Common myeloid progenitor, CD34-positive (primary cell): ENCODE measurements at regions of chr2 and their contacts with region 1.

Region 1: DNA sequence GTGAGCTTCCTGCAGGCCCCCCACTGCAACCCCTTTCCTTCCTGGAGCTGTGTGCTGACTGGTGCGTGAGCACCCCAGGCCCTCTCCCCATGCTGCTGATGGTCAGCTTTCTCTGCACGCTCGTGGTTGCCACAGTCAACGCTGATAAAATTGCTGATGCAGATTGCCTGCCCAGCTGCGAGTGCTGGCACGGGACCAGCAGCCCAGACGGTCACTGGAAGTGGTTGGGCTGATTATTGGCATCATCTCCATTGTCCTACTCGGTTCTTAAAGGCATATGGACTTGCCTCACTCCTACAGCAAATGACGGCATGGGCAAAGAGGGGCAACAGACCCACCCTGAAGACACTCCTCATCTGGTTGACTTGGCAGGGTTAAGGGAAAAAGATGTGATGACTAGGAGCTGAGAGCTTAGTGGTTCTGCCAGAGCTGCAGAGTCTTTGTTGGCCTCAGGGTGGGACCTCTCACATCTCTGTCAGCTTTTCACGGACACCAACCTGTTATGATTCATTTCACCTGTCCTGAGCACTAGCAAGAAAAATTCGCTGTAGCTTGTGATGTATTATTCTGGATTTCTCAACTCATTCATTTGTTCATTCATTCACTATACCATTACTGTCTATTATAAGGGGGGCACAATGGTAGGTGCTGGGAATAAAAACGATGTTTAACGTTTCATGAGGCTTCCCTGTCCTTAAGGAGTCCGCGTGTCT is 38.4 kb downstream of the PAX8 start:
- DNase-seq: peak in 2 of 3 donors; percentile 51 to 59
- H3K4me3 ChIP-seq: peak overlapping the region in 3 of 7 experiments; percentile 12 to 31 (median 25)
- H3K27ac ChIP-seq: no peak overlapping the region
- H3K4me1 ChIP-seq: peaks cover 4 to 47% (median 22%) of the 10 kb centered on the region in 4 experiments
- H3K27me3 ChIP-seq: no peaks in the 10 kb centered on the region

Region 2: GRCh38 chr2:113225263-113226259 is 14.7 kb before region 1 on chr2:
- CTCF ChIA-PET with region 1: interaction called, 13 read pairs
- POLR2A ChIA-PET with region 1: no interaction called
- DNase-seq: peak in 2 of 3 donors; percentile 57 to 63
- H3K4me3 ChIP-seq: no peak overlapping the region
- H3K27ac ChIP-seq: no peak overlapping the region
- H3K4me1 ChIP-seq: peaks cover 23 to 61% (median 50%) of the 10 kb centered on the region in 4 experiments
- H3K27me3 ChIP-seq: no peaks in the 10 kb centered on the region

Region 3: DNA sequence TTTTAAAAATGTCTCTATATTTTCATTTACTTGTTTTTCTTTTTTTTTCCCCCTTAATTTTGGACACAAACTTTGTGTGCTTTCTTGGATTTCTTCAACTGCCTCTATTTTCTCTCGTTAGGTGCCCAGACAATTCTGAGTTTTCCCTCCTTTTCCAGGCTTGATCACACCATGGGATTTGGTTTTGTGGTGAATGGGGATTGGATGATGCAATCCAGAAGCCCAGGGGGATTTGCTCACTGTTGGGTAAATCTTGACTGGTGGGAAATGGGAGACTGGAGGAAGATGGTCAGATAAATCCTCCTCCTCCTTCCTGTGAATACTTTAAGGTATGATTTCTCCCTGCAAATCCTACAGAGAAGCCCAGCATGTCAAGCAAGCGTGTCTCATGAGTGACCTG is 57.9 kb after region 1 on chr2:
- CTCF ChIA-PET with region 1: no interaction called
- POLR2A ChIA-PET with region 1: no interaction called
- DNase-seq: no peak
- H3K4me3 ChIP-seq: no peak overlapping the region
- H3K27ac ChIP-seq: no peak overlapping the region
- H3K4me1 ChIP-seq: no peaks in the 10 kb centered on the region
- H3K27me3 ChIP-seq: no peaks in the 10 kb centered on the region